Calu3 (cell line): ENCODE measurements at regions of chr19 and their contacts with region 1.

Region 1: GRCh38 chr19:34220472-34221063 is 33.8 kb upstream of the GARRE1 start:
- DNase-seq: peak; percentile 78
- H3K4me3 Mint-ChIP-seq: no peak overlapping the region
- H3K27ac Mint-ChIP-seq: no peak overlapping the region
- H3K4me1 Mint-ChIP-seq: peaks cover 38% of the 10 kb centered on the region
- H3K27me3 Mint-ChIP-seq: no peaks in the 10 kb centered on the region
- CTCF ChIP-seq: peak; percentile 84

Region 2: GRCh38 chr19:32318880-32319520 is 1901.6 kb before region 1 on chr19:
- CTCF ChIA-PET with region 1: no interaction called
- intact Hi-C with region 1: no loop called
- DNase-seq: peak; percentile 47
- H3K4me3 Mint-ChIP-seq: no peak overlapping the region
- H3K27ac Mint-ChIP-seq: no peak overlapping the region
- H3K4me1 Mint-ChIP-seq: no peaks in the 10 kb centered on the region
- H3K27me3 Mint-ChIP-seq: peaks cover 41% of the 10 kb centered on the region
- CTCF ChIP-seq: peak; percentile 33

Region 3: GRCh38 chr19:34171877-34172660 is 48.5 kb before region 1 on chr19 and contains the start of gene LSM14A:
- CTCF ChIA-PET with region 1: no interaction called
- intact Hi-C with region 1: loop called (anchors 2 kb)
- DNase-seq: peak; percentile 96
- H3K4me3 Mint-ChIP-seq: peak within 1 kb of the TSS; percentile 89
- H3K27ac Mint-ChIP-seq: peak within 1 kb of the TSS; percentile 81
- H3K4me1 Mint-ChIP-seq: peaks cover 21% of the 10 kb centered on the region
- H3K27me3 Mint-ChIP-seq: peaks cover 21% of the 10 kb centered on the region
- CTCF ChIP-seq: no peak
- total RNA-seq, gene LSM14A: 114 and 131 TPM in 2 replicates

Region 4: DNA sequence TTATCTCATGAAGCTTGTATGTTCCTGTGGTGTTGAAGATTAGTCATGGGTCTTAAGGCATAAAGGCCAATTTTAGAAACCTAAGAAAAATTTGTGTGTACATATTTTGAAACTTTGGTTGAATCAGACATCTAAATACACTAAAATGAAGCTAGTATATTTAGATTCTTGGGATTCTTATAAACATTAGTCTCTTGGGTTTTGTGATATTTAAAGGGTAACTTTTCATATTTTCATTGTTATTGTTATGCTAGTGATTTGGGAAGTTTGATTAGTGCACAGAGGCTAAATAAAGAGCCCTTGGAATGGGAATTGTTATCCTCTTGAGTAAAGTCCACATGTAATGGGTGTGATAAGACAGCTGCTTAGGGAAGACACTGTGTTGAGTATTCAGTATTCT is 232.2 kb after region 1 on chr19:
- CTCF ChIA-PET with region 1: no interaction called
- intact Hi-C with region 1: no loop called
- DNase-seq: no peak
- H3K4me3 Mint-ChIP-seq: no peak overlapping the region
- H3K27ac Mint-ChIP-seq: no peak overlapping the region
- H3K4me1 Mint-ChIP-seq: peaks cover 4% of the 10 kb centered on the region
- H3K27me3 Mint-ChIP-seq: no peaks in the 10 kb centered on the region
- CTCF ChIP-seq: no peak